Panc1 (cell line): ENCODE measurements at regions of chr1 and their contacts with region 1.

Region 1: GRCh38 chr1:167721617-167722151 is at the start of gene MPZL1:
- DNase-seq: peak; percentile 64
- ATAC-seq: peak; percentile 97
- H3K4me3 ChIP-seq: peak within 1 kb of the TSS; percentile 61 to 82
- H3K27ac ChIP-seq: peak within 1 kb of the TSS; percentile 80
- H3K4me1 ChIP-seq: peaks cover 16% of the 10 kb centered on the region
- H3K27me3 ChIP-seq: no peaks in the 10 kb centered on the region
- CTCF ChIP-seq: no peak
- total RNA-seq, gene MPZL1: 72.0 TPM

Region 2: GRCh38 chr1:167676916-167677848 is 44.5 kb before region 1 on chr1:
- CTCF ChIA-PET with region 1: no interaction called
- POLR2A ChIA-PET with region 1: no interaction called
- in situ Hi-C with region 1: no loop called
- intact Hi-C with region 1: no loop called
- DNase-seq: no peak
- ATAC-seq: no peak
- H3K4me3 ChIP-seq: no peak overlapping the region
- H3K27ac ChIP-seq: no peak overlapping the region
- H3K4me1 ChIP-seq: no peaks in the 10 kb centered on the region
- H3K27me3 ChIP-seq: no peaks in the 10 kb centered on the region
- CTCF ChIP-seq: no peak

Region 3: DNA sequence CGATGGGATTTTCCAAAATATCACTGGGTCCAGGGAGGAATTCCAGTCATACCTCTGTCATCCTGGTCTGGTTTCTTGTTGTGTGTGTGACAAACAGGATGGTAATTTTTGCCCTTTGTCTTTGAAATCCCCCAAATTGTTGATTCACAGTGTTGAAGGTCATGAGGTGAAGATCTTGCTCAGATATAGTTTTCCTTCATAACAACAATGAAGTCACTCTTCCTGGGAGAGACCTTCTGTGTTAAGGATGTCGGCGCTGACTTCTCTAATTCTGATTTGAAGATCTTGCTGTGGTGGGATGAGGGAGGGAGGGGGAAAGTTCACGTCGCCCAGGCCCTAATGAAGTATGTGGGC is 32.1 kb before region 1 on chr1:
- CTCF ChIA-PET with region 1: no interaction called
- POLR2A ChIA-PET with region 1: no interaction called
- in situ Hi-C with region 1: no loop called
- intact Hi-C with region 1: no loop called
- DNase-seq: no peak
- ATAC-seq: no peak
- H3K4me3 ChIP-seq: no peak overlapping the region
- H3K27ac ChIP-seq: no peak overlapping the region
- H3K4me1 ChIP-seq: peaks cover 2% of the 10 kb centered on the region; the same call in 1 of the 2 replicates
- H3K27me3 ChIP-seq: no peaks in the 10 kb centered on the region
- CTCF ChIP-seq: no peak

Region 4: DNA sequence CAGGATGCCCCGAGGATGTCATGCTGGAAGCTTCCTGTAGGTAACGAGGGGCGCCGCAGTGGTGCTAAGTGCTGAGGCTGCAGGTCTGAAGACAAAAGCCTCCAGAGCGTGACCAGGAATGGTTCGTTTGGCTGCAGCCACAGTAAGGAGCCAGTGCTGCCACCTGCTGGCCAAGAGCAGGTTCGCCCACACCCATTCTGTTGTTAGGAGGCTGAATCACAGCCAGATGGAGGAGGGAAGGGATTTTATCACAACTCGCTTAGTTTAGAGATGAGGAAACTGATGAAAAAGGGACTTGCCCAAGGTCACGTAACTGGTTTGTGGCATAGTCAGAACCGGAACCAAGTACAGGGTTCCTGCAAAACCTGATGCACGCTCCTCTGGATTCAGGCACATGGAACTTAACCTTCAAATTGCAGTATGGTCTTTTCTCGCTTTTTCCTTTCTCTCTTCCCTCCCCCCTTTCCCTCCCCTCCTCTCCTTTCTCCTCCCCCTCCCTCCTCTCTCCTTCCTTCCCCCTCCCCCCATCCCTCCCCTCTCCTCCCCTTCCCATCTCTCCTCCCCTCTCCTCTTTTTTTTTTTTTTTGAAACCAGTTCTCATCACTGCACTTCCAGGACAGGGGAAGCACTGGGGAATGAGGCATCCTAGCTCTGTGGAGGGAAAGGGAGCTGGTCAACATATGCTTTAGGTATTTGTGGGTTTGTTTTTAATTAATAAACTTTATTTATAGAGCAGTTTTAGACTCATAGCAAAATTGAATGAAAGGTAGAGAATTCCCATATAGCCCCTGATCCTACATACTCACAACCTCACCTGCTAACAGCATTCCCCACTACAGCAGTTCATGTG is 81.9 kb after region 1 on chr1:
- CTCF ChIA-PET with region 1: interaction called, 14 read pairs
- POLR2A ChIA-PET with region 1: no interaction called
- in situ Hi-C with region 1: no loop called
- intact Hi-C with region 1: loop called (anchors 2 kb)
- DNase-seq: peak; percentile 64
- ATAC-seq: peak; percentile 99
- H3K4me3 ChIP-seq: peak overlapping the region in 1 of 2 experiments; percentile 39; a peak in 2 of 4 replicates
- H3K27ac ChIP-seq: no peak overlapping the region
- H3K4me1 ChIP-seq: no peaks in the 10 kb centered on the region
- H3K27me3 ChIP-seq: no peaks in the 10 kb centered on the region
- CTCF ChIP-seq: peak; percentile 96

Region 5: DNA sequence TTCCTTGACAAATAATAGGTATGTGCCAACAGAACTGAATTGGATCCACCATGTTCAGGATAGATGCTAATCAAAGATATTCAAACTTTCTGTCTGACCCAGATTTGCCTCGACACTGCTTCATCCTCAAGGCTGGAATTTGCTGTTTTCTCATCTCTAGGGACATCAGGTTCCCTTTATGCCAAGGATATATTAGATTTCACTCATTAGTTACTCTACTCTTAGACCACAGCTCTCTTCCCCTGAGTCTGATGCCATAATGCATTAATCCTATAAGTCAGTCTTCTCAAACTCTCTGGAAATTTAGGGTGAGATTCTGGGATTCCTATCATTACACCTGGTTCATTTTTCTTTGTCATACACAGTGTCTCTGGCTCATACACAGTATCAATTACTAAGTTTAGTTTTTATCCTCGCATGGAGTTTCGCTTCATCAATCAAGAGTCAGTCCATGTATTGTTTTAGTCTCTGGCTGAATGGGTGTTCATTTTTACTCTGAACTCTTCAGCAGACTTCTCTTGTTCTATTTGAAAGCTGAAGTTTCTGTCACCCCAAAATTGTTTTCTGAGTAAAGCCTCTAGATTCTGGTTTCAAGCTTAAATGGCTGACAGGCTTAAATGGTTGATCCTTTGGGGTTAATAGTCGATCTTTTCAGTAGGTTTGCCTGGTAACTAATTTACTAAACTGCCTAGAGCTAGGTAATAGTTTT is 205.5 kb after region 1 on chr1:
- CTCF ChIA-PET with region 1: no interaction called
- POLR2A ChIA-PET with region 1: no interaction called
- in situ Hi-C with region 1: no loop called
- intact Hi-C with region 1: loop called (anchors 5 kb)
- DNase-seq: no peak
- ATAC-seq: peak; percentile 36
- H3K4me3 ChIP-seq: peak overlapping the region; percentile 19 to 32; a peak in 3 of 4 replicates
- H3K27ac ChIP-seq: peak overlapping the region; percentile 92
- H3K4me1 ChIP-seq: peaks cover 41% of the 10 kb centered on the region
- H3K27me3 ChIP-seq: no peaks in the 10 kb centered on the region
- CTCF ChIP-seq: no peak